ENCODE measurements at regions of chr2 and their contacts with region 1.

Region 1: GRCh38 chr2:10408649-10409579 is 39.2 kb downstream of the ODC1 start:
- DNase-seq: peak; percentile 90
- ATAC-seq: peak; percentile 68
- H3K4me3 ChIP-seq: peak overlapping the region; percentile 4 to 42 (median 10)
- H3K4me3 Mint-ChIP-seq: peak overlapping the region; percentile 86
- H3K27ac ChIP-seq: peak overlapping the region; percentile 68 to 77
- H3K27ac Mint-ChIP-seq: peak overlapping the region; percentile 86
- H3K4me1 ChIP-seq: peaks cover 54 to 76% of the 10 kb centered on the region in 2 donors
- H3K4me1 Mint-ChIP-seq: peaks cover 67% of the 10 kb centered on the region
- H3K27me3 ChIP-seq: no peaks in the 10 kb centered on the region
- H3K27me3 Mint-ChIP-seq: no peaks in the 10 kb centered on the region
- CTCF ChIP-seq: peak; percentile 93

Region 2: GRCh38 chr2:10072656-10073480 is 336.0 kb before region 1 on chr2:
- CTCF ChIA-PET with region 1: interaction called, 24 read pairs
- POLR2A ChIA-PET with region 1: no interaction called
- intact Hi-C with region 1: no loop called
- DNase-seq: peak; percentile 86
- ATAC-seq: peak; percentile 95
- H3K4me3 ChIP-seq: no peak overlapping the region
- H3K4me3 Mint-ChIP-seq: no peak overlapping the region
- H3K27ac ChIP-seq: no peak overlapping the region
- H3K27ac Mint-ChIP-seq: no peak overlapping the region
- H3K4me1 ChIP-seq: peaks cover 3 to 6% of the 10 kb centered on the region in 2 donors
- H3K4me1 Mint-ChIP-seq: peaks cover 4% of the 10 kb centered on the region
- H3K27me3 ChIP-seq: peaks cover 0 to 36% (median 22%) of the 10 kb centered on the region in 4 experiments
- H3K27me3 Mint-ChIP-seq: peaks cover 43% of the 10 kb centered on the region
- CTCF ChIP-seq: peak; percentile 81

Region 3: DNA sequence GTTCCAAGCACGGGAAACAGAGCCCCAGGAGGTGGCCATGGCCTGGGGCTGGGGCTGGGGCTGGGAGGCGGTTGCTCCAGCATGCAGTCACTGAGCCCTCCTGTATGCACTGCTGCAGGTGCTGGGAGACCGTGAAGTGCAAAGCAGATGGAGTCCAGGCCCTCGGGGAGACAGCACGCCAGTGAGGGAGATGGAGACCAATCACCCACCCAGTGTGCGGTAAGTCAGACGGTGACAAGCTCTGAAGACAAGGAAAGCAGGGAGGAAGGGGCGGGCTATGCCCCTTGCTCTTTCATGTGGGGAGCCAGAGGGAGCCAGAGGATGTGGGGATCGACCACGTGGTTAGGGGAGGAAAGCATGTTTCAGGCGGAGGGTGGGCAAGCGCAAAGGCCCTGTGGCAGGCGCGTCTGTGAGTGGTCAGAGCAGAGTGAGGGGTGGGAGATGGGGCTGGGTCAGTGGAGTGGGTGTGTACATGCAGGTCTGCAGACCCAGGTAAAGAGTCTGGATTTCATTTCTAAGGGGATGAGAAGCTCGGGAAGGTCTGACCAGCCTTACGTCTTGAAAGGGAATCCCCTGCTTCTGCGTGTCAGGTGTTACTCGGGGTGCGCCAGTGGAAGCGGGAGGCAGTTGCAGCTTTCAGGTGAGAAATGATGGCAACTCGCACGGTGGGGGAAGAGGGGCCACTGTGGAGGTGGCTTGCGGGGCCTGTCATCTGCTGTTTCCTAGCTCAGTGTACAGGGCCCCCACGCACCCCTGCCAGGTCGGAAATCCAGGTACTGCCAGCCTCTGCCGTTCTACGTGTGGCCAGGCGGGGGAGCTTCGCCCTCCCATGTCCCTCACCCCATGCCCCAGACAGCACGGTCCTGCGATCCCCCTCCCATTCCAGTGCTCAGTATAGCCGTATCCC is 266.9 kb before region 1 on chr2:
- CTCF ChIA-PET with region 1: interaction called, 64 read pairs
- POLR2A ChIA-PET with region 1: no interaction called
- intact Hi-C with region 1: no loop called
- DNase-seq: peak; percentile 53
- ATAC-seq: peak; percentile 88
- H3K4me3 ChIP-seq: no peak overlapping the region
- H3K4me3 Mint-ChIP-seq: no peak overlapping the region
- H3K27ac ChIP-seq: no peak overlapping the region
- H3K27ac Mint-ChIP-seq: no peak overlapping the region
- H3K4me1 ChIP-seq: no peaks in the 10 kb centered on the region
- H3K4me1 Mint-ChIP-seq: no peaks in the 10 kb centered on the region
- H3K27me3 ChIP-seq: no peaks in the 10 kb centered on the region
- H3K27me3 Mint-ChIP-seq: no peaks in the 10 kb centered on the region
- CTCF ChIP-seq: peak; percentile 37

Region 4: DNA sequence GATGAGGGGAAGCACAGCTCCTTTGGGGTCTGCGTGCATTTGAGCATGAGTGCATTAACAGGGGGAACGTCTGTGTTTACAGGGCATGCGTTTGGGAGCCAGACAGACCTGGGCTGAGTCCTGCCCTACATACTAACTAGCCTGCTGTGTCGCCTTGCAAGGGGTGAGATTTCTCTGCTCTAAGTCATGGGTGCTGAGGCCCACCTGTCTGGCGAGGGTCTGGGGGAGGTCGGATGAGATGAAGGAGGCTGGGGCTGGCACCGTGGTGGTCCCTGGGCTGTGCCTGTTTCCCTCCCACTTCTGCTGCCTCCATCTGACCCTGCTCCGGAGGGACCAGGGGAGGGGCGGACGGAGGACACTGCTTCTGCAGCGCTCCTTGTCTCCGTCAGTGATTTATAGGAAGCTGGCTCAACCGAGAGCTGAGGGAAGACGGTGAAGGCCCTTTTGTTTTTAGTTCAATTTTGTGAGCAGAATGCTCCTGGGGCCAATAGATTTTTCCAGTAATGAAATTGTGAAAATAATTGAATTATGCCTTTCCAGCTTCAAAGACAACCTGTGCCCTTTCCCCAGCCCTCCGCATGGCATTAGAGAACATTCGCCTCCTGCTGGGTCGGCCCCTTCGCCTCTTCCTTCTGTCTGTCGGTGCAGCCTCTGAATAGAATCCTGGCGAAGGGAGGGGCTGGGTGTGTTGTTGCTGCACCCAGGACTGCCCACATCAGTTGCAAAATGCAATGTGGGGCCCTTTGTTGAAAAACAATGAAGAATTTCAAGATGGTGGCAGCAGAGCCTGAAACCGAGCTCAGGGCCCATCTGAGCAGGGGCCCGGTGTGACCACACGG is 236.7 kb before region 1 on chr2:
- CTCF ChIA-PET with region 1: no interaction called
- POLR2A ChIA-PET with region 1: no interaction called
- intact Hi-C with region 1: no loop called
- DNase-seq: no peak
- ATAC-seq: no peak
- H3K4me3 ChIP-seq: no peak overlapping the region
- H3K4me3 Mint-ChIP-seq: no peak overlapping the region
- H3K27ac ChIP-seq: no peak overlapping the region
- H3K27ac Mint-ChIP-seq: no peak overlapping the region
- H3K4me1 ChIP-seq: no peaks in the 10 kb centered on the region
- H3K4me1 Mint-ChIP-seq: no peaks in the 10 kb centered on the region
- H3K27me3 ChIP-seq: no peaks in the 10 kb centered on the region
- H3K27me3 Mint-ChIP-seq: no peaks in the 10 kb centered on the region
- CTCF ChIP-seq: no peak

Region 5: DNA sequence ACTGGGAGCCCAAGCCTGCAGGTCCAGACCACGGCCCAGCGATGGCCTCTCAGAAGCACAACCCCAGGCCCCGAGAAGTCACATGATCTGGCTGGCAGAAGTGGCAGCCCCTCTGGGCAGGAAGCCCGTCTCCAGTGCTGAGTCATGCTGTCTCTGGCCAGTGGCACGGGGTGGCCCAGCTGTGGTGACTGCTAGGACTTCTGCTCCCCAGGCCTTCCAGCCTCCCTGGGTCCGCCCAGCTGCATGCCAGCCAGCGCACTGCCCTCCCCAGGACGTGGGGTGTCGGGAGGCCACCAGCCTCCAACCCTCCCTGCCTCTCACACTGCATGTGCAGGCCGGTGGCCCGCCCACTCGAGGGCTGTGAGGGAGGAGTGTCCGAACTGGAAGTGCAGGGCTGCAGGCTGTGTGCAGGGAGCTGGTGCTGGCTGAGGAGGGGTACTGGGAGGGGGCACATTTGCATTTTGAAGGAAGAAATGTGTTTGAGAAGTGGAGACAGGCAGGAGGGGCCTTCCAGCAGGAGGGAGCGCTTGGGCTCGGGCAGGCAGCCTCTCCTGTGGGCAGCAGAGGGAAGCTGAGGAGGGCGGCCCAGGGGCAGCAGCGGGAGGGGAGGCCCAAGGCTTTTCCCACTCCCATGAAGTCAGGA is 123.2 kb before region 1 on chr2:
- CTCF ChIA-PET with region 1: interaction called, 14 read pairs
- POLR2A ChIA-PET with region 1: no interaction called
- intact Hi-C with region 1: no loop called
- DNase-seq: no peak
- ATAC-seq: no peak
- H3K4me3 ChIP-seq: no peak overlapping the region
- H3K4me3 Mint-ChIP-seq: no peak overlapping the region
- H3K27ac ChIP-seq: no peak overlapping the region
- H3K27ac Mint-ChIP-seq: no peak overlapping the region
- H3K4me1 ChIP-seq: peaks cover 0 to 12% of the 10 kb centered on the region in 2 donors
- H3K4me1 Mint-ChIP-seq: peaks cover 6% of the 10 kb centered on the region
- H3K27me3 ChIP-seq: no peaks in the 10 kb centered on the region
- H3K27me3 Mint-ChIP-seq: no peaks in the 10 kb centered on the region
- CTCF ChIP-seq: no peak

Region 6: DNA sequence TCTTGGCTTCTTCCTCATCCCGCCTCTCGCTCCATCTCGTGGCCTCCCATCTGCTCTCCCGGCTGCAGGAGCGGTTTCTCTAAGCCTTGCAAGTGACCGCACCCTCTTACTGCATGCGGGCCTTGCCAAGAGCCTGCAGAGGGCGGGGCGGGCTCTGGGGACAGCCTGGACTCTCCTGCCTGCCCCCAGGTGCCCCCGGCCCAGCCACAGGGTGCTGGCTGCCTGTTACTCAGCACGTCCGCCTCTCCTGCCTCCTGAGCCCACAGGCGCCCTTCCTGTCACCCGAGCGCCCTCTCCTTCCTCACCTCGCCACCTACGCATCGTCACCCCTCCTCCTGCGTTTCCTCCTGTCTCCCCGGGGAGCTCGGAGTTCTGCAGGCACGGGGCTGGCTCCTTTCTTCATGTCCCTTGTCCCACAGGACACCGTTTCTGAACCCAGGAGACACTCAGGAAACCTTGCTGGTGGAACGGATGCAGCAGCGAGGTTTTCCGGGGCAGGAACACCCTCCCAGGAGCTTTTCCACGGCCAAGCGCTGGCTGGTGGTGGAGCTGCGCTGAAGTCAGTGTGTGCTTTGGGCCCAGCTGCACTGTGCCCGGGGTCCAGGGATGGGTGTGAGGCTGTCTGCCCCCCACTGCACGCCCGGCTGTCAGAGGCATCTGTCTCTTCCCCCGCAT is 77.8 kb before region 1 on chr2:
- CTCF ChIA-PET with region 1: interaction called, 14 read pairs
- POLR2A ChIA-PET with region 1: interaction called, 3 read pairs
- intact Hi-C with region 1: loop called (anchors 1 kb)
- DNase-seq: peak; percentile 65
- ATAC-seq: peak; percentile 38
- H3K4me3 ChIP-seq: peak overlapping the region; percentile 3 to 57 (median 52)
- H3K4me3 Mint-ChIP-seq: peak overlapping the region; percentile 70
- H3K27ac ChIP-seq: peak overlapping the region; percentile 58 to 82
- H3K27ac Mint-ChIP-seq: peak overlapping the region; percentile 81
- H3K4me1 ChIP-seq: peaks cover 55 to 69% of the 10 kb centered on the region in 2 donors
- H3K4me1 Mint-ChIP-seq: peaks cover 74% of the 10 kb centered on the region
- H3K27me3 ChIP-seq: no peaks in the 10 kb centered on the region
- H3K27me3 Mint-ChIP-seq: no peaks in the 10 kb centered on the region
- CTCF ChIP-seq: no peak

Region 7: GRCh38 chr2:10375570-10376281 is 33.2 kb before region 1 on chr2:
- CTCF ChIA-PET with region 1: interaction called, 178 read pairs
- POLR2A ChIA-PET with region 1: interaction called, 72 read pairs
- intact Hi-C with region 1: loop called (anchors 1 kb)
- DNase-seq: peak; percentile 84
- ATAC-seq: peak; percentile 62
- H3K4me3 ChIP-seq: peak overlapping the region in 3 of 5 experiments; percentile 14 to 47 (median 17)
- H3K4me3 Mint-ChIP-seq: peak overlapping the region; percentile 71
- H3K27ac ChIP-seq: peak overlapping the region; percentile 73 to 82
- H3K27ac Mint-ChIP-seq: peak overlapping the region; percentile 94
- H3K4me1 ChIP-seq: peaks cover 64 to 74% of the 10 kb centered on the region in 2 donors
- H3K4me1 Mint-ChIP-seq: peaks cover 79% of the 10 kb centered on the region
- H3K27me3 ChIP-seq: no peaks in the 10 kb centered on the region
- H3K27me3 Mint-ChIP-seq: no peaks in the 10 kb centered on the region
- CTCF ChIP-seq: no peak

Region 8: GRCh38 chr2:10426726-10427617 is 18.1 kb after region 1 on chr2:
- CTCF ChIA-PET with region 1: interaction called, 207 read pairs
- POLR2A ChIA-PET with region 1: interaction called, 9 read pairs
- intact Hi-C with region 1: loop called (anchors 1 kb)
- DNase-seq: no peak
- ATAC-seq: no peak
- H3K4me3 ChIP-seq: no peak overlapping the region
- H3K4me3 Mint-ChIP-seq: no peak overlapping the region
- H3K27ac ChIP-seq: no peak overlapping the region
- H3K27ac Mint-ChIP-seq: no peak overlapping the region
- H3K4me1 ChIP-seq: peaks cover 3 to 6% of the 10 kb centered on the region in 2 donors
- H3K4me1 Mint-ChIP-seq: peaks cover 4% of the 10 kb centered on the region
- H3K27me3 ChIP-seq: peaks cover 0 to 4% (median 0%) of the 10 kb centered on the region in 4 experiments
- H3K27me3 Mint-ChIP-seq: no peaks in the 10 kb centered on the region
- CTCF ChIP-seq: no peak